PC-3 (cell line): ENCODE measurements at regions of chr1 and their contacts with region 1.

Region 1: DNA sequence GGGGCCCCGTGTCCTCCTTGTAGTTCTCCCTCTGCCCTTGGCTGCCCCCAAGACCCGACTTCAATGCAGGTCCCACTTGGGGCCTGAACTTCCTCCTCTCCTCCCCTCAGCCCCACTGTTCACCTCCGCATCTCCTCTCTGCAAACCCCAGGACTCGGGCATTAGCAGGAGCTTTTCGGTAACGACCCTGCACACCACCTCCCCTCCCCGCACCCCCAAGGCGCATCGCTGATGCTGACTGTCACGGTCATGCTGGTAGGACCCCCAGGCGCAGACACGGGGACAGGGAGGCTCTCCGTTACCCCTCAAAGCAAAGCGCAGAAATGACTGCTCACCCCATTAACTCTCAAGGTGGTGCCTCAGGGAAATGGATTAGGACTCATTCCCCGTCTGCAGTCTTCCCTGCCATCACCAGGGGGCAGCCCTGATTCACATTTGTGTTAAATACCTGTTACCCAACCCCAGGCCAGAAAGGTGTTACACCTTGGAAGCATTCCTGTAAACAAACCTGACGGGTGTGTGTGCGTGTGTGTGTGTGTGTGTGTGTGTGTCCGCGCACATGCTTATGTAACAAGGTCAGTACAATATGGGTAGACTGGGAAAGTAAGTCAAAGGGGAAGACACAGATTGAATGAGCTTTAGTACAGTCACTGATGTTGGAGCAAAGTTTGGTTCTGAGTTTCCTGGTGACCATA is 6.4 kb upstream of the GUCA2B start:
- DNase-seq: peak; percentile 90
- ATAC-seq: peak; percentile 84
- H3K4me3 ChIP-seq: no peak overlapping the region
- H3K27ac ChIP-seq: no peak overlapping the region
- H3K4me1 ChIP-seq: peaks cover 8% of the 10 kb centered on the region; the same call in 1 of the 2 replicates
- H3K27me3 ChIP-seq: no peaks in the 10 kb centered on the region
- CTCF ChIP-seq: peak; percentile 92

Region 2: DNA sequence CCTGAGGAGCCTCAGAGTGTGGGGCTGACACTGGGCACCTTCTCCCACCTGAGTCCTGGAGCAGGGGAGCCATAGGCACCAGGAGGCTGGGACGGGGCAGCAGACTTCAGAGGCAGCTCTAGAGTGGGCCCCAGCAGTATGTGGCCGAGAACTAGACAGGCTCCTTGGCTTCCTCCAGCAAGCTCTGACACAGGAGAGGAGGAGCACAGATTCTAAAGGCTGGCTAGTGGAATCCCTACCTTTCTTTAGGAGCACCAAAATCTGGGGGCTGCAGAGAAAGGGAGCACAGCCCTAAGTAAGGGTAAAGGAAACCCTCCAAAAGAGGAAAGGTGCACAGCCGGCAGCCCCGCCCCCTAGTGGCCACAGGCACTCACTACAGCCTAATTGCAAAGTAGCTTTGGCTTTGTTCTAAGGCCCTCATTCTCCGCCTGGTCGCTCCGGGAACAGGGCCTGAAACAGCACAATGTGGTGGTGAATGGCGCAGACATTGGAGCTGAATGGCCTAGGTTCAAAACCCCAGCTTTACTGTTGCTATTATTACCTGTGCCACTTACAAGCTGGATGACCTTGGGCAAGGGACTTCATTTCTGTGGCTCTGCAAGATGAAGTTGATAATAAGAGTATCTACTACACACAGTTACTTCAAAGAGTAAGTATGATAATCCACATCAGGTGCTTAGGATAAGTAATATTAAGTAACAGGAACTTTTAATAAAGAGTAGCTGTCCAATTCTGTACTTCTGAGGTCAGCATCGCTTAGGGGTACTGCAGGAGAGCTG is 26.6 kb after region 1 on chr1:
- CTCF ChIA-PET with region 1: interaction called, 8 read pairs
- POLR2A ChIA-PET with region 1: no interaction called
- intact Hi-C with region 1: loop called (anchors 2 kb)
- DNase-seq: peak; percentile 56
- ATAC-seq: peak; percentile 31
- H3K4me3 ChIP-seq: no peak overlapping the region
- H3K27ac ChIP-seq: peak overlapping the region; percentile 88
- H3K4me1 ChIP-seq: peaks cover 64% of the 10 kb centered on the region
- H3K27me3 ChIP-seq: no peaks in the 10 kb centered on the region
- CTCF ChIP-seq: peak; percentile 98